SK-N-SH (cell line): ENCODE measurements at regions of chr5 and their contacts with region 1.

Region 1: GRCh38 chr5:169583424-169584204 is at the start of gene SPDL1:
- DNase-seq: peak; percentile 89
- H3K4me3 ChIP-seq: peak within 1 kb of the TSS; percentile 87 to 92
- H3K27ac ChIP-seq: peak within 1 kb of the TSS; percentile 77 to 81
- H3K4me1 ChIP-seq: peaks cover 3 to 21% of the 10 kb centered on the region in 2 experiments; a peak in 3 of 4 replicates
- H3K27me3 ChIP-seq: no peaks in the 10 kb centered on the region
- CTCF ChIP-seq: no peak
- EP300 ChIP-seq: no peak
- RAD21 ChIP-seq: no peak
- polyA plus RNA-seq, gene SPDL1: 45.1 and 63.3 TPM in 2 replicates

Region 2: GRCh38 chr5:169548315-169548714 is 35.3 kb before region 1 on chr5:
- CTCF ChIA-PET with region 1: interaction called, 13 read pairs
- POLR2A ChIA-PET with region 1: interaction called, 3 read pairs
- DNase-seq: peak; percentile 35
- H3K4me3 ChIP-seq: no peak overlapping the region
- H3K27ac ChIP-seq: peak overlapping the region in 1 of 2 experiments; percentile 81; a peak in 2 of 4 replicates
- H3K4me1 ChIP-seq: peaks cover 0 to 23% of the 10 kb centered on the region in 2 experiments; a peak in 2 of 4 replicates
- H3K27me3 ChIP-seq: no peaks in the 10 kb centered on the region
- CTCF ChIP-seq: peak; percentile 76
- EP300 ChIP-seq: 0 out of 4 replicates have a peak, but pooled peaks of 1 of the 2 experiments have one; percentile 20
- RAD21 ChIP-seq: peak; percentile 99

Region 3: GRCh38 chr5:169569513-169569912 is 14.1 kb before region 1 on chr5:
- CTCF ChIA-PET with region 1: interaction called, 18 read pairs
- POLR2A ChIA-PET with region 1: no interaction called
- DNase-seq: no peak
- H3K4me3 ChIP-seq: no peak overlapping the region
- H3K27ac ChIP-seq: no peak overlapping the region
- H3K4me1 ChIP-seq: no peaks in the 10 kb centered on the region
- H3K27me3 ChIP-seq: no peaks in the 10 kb centered on the region
- CTCF ChIP-seq: no peak
- EP300 ChIP-seq: no peak
- RAD21 ChIP-seq: no peak

Region 4: DNA sequence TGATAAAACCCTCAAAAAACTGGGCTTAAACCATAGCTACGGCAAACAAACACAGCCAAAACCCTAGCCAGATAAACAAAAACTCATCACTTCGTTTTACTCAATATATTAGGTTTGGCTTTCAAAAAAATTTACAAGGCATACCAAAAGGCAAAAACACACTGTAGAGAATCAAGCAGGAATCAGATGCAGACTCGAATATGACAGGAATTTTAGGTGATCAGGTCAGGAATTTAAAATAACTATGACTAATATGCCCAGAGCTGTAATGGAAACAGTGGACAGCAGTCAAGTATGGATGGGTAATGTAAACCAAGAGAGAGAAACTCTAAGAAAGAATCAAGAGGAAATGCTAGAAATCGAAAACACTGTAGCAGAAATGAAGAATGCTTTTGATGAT is 27.0 kb after region 1 on chr5:
- CTCF ChIA-PET with region 1: no interaction called
- POLR2A ChIA-PET with region 1: no interaction called
- DNase-seq: no peak
- H3K4me3 ChIP-seq: no peak overlapping the region
- H3K27ac ChIP-seq: no peak overlapping the region
- H3K4me1 ChIP-seq: no peaks in the 10 kb centered on the region
- H3K27me3 ChIP-seq: no peaks in the 10 kb centered on the region
- CTCF ChIP-seq: no peak
- EP300 ChIP-seq: no peak
- RAD21 ChIP-seq: no peak